ENCODE measurements at regions of chr7 and their contacts with region 1.

Region 1: GRCh38 chr7:7263312-7264230 is 81.2 kb downstream of the C1GALT1 start:
- DNase-seq: no peak
- H3K4me3 ChIP-seq: no peak overlapping the region
- H3K27ac ChIP-seq: no peak overlapping the region
- H3K4me1 ChIP-seq: peaks cover 0 to 7% of the 10 kb centered on the region in 2 experiments; a peak in 1 of 4 replicates
- H3K27me3 ChIP-seq: no peaks in the 10 kb centered on the region
- CTCF ChIP-seq: no peak
- EP300 ChIP-seq: no peak
- RAD21 ChIP-seq: no peak

Region 2: DNA sequence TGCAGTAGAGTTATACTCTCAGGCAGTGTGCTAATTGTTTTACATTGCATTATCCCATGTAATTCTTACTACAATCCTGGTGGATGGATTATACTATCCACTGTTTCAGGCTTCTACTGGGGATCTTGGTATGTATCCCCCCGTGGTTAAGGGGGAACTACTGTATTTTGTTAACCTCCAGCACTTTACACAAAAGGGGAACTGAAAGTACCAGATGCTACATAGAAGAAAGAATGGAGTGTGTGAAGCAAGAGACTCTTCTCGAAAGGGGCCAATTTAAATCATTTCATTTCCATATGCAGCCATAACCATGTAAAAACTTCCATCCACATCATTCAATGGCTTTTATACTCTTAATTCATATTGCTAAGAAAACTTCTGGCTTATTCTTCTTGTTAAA is 11.8 kb before region 1 on chr7:
- CTCF ChIA-PET with region 1: interaction called, 15 read pairs
- POLR2A ChIA-PET with region 1: no interaction called
- DNase-seq: no peak
- H3K4me3 ChIP-seq: no peak overlapping the region
- H3K27ac ChIP-seq: no peak overlapping the region
- H3K4me1 ChIP-seq: peaks cover 0 to 8% of the 10 kb centered on the region in 2 experiments; a peak in 1 of 4 replicates
- H3K27me3 ChIP-seq: no peaks in the 10 kb centered on the region
- CTCF ChIP-seq: no peak
- EP300 ChIP-seq: no peak
- RAD21 ChIP-seq: no peak

Region 3: DNA sequence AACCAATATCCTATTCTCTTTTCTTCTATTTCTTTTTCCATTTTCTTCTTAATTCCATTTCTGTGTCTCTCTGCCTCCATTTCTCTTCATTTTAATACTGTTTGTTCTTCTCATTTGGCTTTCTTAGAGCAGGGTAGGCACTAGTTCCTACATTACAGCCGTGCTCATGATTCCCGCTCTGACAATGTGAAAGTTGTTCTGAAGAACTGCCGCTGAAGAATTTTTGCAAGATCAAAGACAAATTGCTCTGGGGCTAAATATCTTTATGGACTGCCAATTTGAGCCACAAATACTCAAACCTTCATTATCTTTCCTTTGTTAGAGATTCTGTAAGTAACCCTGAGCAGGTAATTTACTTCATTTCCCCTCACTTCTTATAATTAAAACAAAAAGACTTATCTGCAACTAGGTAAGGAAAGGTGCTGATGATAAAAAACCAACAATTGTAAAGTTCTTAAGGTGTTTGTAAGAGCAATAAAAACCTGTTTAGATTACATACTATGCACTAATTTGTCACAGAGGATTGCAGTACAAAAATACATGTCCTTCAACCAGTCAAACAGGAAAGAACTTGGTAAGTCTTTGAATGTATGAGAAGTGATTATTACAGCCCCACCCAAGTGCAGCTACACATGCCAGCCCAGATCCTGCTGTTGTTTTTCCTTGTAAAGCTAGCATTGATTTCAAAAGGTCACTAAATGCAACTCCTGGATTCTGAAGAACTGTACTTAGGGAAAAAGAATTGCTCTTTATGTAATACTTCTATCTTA is 144.6 kb after region 1 on chr7:
- CTCF ChIA-PET with region 1: no interaction called
- POLR2A ChIA-PET with region 1: no interaction called
- DNase-seq: no peak
- H3K4me3 ChIP-seq: no peak overlapping the region
- H3K27ac ChIP-seq: no peak overlapping the region
- H3K4me1 ChIP-seq: no peaks in the 10 kb centered on the region
- H3K27me3 ChIP-seq: no peaks in the 10 kb centered on the region
- CTCF ChIP-seq: no peak
- EP300 ChIP-seq: no peak
- RAD21 ChIP-seq: no peak

Measured in SK-N-SH (cell line).